ENCODE measurements at regions of chr15 and their contacts with region 1.

Region 1: GRCh38 chr15:76311100-76311953 is at the start of gene ETFA:
- H3K4me3 ChIP-seq: peak within 1 kb of the TSS; percentile 77
- H3K27ac ChIP-seq: peak within 1 kb of the TSS; percentile 84
- H3K4me1 ChIP-seq: peaks cover 16% of the 10 kb centered on the region; the same call in 1 of the 2 replicates
- CTCF ChIP-seq: peak; percentile 39; the same call in 1 of the 2 replicates

Region 2: DNA sequence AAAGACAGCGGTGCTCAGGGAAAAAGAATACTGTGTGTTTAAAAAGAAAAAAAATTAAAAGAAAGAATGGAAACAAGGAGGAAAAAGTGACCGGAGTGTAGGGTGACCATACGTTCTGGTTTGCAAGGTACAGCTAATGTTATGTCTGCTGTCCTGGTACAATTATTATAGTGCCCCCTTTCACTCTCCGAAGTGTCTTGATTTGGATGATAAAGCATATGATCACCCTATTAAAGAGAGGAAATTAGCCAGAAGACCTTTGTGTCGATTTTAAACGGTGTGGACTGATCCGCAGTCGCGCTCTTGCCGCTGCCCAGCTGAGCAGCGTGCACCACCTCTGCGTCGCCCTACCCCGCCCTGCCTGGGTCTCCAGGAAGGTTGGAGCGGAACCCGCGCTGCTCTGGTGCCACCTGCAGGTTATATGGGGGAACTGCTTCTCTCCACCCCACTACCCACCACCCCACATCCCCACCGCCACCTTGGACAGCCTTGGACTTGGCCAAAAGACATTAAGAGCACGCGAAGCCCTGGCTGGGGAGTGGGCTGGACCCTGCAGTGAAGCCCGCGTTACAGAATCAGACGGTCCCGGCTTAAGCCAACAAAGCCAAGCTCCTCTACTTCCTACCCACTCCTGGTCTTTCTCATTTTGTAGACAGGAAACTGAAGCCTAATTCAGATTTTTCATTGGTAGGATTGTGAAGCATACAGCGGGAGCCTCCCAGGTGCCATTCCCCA is 509.3 kb before region 1 on chr15:
- CTCF ChIA-PET with region 1: no interaction called
- POLR2A ChIA-PET with region 1: no interaction called
- H3K4me3 ChIP-seq: no peak overlapping the region
- H3K27ac ChIP-seq: no peak overlapping the region
- H3K4me1 ChIP-seq: no peaks in the 10 kb centered on the region
- CTCF ChIP-seq: peak; percentile 92

Region 3: DNA sequence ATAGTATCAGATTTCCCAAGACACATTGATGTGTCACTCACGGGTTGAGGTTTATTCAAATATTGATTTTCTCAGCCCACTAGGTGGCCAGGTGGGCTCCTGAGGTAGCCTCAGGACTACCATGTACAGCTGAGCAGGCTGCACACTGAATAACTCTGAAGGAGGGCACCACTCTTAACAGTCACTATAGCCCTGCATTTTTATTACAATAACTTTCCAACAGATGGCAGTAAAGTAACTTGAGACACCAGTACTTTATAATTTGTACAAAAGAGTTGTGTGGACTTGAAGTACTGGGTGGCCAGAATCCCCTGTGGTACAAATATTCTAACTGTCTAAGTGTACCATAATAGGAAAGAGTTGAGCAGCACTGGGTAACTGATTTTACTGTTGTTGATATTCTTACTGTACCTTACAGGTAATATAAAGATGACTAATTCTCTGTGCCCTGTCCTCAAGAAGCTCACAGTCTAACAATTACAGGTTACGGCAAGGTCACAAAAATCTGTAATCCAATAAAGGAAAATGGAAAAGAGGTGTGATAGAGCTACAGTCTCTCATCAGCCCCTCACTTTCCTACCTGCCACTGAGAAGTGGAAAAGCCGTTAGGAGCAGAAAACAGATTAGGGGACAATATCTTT is 76.0 kb before region 1 on chr15:
- CTCF ChIA-PET with region 1: interaction called, 6 read pairs
- POLR2A ChIA-PET with region 1: interaction called, 12 read pairs
- H3K4me3 ChIP-seq: no peak overlapping the region
- H3K27ac ChIP-seq: no peak overlapping the region
- H3K4me1 ChIP-seq: peaks cover 28% of the 10 kb centered on the region
- CTCF ChIP-seq: peak; percentile 24; the same call in 1 of the 2 replicates

Region 4: DNA sequence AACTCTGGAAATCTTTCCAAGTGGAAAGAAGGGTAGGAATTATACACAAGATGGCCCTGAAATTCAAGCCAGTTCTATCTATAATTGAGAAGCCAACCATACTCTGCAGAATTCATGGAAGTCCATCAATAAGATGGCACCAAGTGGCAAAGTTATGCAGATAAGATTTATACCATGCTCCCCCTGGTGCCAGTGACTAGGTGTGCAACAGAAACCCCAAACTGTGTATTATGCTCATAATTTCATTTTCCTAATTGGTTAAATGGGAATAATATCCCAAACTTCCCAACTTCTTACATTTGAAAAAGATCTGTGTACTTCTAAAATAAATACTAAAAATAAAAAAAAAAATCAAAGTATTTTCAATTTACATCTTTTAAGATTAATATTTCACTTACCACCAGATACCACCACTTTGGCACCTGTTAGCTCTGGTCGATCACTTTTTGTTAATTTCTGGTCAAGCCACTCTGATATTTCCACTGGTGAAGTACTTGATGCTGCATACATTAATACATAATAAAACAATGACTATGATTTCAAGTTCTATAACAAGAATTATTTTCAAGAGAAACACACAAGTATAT is 26.0 kb before region 1 on chr15:
- CTCF ChIA-PET with region 1: interaction called, 4 read pairs
- POLR2A ChIA-PET with region 1: interaction called, 12 read pairs
- H3K4me3 ChIP-seq: no peak overlapping the region
- H3K27ac ChIP-seq: no peak overlapping the region
- H3K4me1 ChIP-seq: no peaks in the 10 kb centered on the region
- CTCF ChIP-seq: 0 out of 2 replicates have a peak, but pooled peaks have one; percentile 12

Region 5: GRCh38 chr15:76324066-76324465 is 12.7 kb after region 1 on chr15:
- CTCF ChIA-PET with region 1: interaction called, 8 read pairs
- POLR2A ChIA-PET with region 1: interaction called, 24 read pairs
- H3K4me3 ChIP-seq: no peak overlapping the region
- H3K27ac ChIP-seq: no peak overlapping the region
- H3K4me1 ChIP-seq: peaks cover 30% of the 10 kb centered on the region
- CTCF ChIP-seq: no peak

Region 6: DNA sequence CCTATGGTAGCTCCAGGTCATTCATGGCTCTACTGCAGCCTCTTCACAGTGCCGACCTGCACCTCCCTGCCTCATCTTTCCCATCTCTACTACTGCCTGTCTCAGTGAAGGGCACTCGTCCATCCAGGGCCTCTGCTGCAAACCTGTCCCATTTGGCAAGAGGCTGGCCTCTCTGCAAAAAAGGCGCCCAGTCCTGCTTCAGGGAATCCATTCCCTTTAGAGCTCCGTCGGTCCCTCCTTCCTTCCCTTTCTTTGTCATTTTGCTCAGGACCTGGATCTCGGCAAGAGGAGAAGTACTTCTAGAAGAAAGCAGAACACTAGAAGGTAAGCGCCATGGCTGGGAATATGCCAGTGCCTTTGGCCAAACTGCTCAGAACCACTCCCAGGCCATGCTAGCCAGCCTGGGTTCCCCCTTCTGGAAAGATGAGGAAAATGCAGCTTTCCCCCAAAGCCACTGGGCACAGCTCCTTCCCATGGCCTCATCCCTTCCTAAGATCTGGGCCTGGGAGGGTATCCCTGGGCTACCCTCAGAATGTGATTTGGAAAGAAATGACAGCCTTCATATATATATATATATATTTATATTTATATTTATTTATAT is 18.9 kb after region 1 on chr15:
- CTCF ChIA-PET with region 1: interaction called, 8 read pairs
- POLR2A ChIA-PET with region 1: interaction called, 83 read pairs
- H3K4me3 ChIP-seq: no peak overlapping the region
- H3K27ac ChIP-seq: no peak overlapping the region
- H3K4me1 ChIP-seq: peaks cover 9% of the 10 kb centered on the region
- CTCF ChIP-seq: no peak

Region 7: DNA sequence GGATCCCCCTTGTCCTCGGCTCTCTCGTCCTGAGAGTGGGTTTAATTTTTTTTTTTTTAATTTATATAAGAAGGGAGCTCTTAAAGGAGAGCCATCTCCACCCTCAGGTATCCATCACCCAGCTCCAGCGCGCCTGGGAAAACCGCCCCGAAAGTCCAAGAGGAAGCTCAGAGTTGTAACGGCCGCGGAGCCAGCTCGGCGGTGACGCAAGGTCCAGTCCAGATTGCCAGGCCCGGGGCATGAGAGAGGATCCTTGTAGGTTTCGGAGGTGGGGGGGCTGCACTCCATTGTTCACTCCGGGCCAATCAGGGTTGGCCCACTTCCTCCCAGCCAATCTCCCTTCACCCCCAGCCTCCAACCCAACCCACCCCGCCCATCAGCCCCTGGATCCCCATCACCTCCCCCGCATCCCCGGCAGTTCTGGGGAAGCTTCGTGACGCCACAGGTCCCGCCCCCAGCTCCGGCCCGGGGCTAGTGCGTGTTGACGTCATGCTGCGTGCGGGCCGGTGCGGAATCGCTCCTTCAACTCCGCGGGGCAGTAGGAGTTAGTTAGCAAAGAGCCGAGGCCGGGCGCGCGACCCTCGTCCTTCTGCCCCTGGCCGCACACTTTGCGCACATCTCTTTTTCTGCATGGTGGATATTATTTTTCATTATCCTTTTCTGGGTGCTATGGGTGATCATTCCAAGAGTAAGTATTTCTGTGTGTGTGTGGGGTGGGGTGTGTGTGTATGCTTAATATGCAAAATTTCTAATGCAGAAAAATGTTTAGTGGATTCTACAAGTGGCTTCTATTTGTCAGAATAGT is 25.1 kb after region 1 on chr15 and contains the start of gene ISL2:
- CTCF ChIA-PET with region 1: interaction called, 3 read pairs
- POLR2A ChIA-PET with region 1: interaction called, 83 read pairs
- H3K4me3 ChIP-seq: peak within 1 kb of the TSS; percentile 78
- H3K27ac ChIP-seq: peak within 1 kb of the TSS; percentile 96
- H3K4me1 ChIP-seq: peaks cover 3% of the 10 kb centered on the region; the same call in 1 of the 2 replicates
- CTCF ChIP-seq: no peak

Region 8: DNA sequence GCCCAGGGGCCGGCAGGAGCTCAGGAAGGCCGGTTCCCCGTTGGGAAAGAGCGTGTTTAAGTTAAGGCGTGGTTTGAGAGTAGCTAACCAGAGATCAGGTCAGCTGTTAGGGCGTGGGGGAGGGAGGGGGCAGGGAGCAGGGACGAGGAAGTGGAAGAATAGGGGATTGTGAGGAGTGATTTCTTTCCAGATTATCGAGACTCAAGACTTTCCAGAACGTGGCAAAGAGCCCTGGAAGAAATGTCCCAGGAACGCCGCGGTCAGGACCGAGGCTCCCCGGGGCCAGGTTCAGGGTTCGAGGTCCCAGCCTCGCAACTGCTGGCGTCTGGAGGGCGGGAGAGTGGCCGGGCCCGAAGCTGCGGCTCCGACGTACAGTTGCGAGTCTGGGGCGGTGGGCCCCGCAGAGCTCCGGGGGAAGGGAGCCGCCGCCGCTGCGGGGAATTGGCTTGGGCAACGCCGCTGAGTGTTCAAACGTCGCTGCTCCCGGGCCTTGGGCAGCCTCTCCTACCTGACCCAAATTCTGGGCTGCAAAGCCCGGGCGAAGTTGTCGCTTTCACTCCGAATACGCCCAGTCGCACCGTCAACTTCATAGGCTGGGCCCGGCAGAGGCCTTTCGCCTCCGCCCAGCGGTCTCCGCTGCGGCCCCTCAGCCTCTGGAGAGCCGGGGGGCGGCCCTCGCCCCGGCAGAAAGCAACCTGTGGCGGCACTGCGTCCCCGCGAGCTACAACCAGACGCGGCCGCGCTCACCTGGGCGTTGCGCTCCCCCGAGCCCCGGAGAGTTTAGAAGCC is 34.7 kb after region 1 on chr15:
- CTCF ChIA-PET with region 1: interaction called, 3 read pairs
- POLR2A ChIA-PET with region 1: interaction called, 12 read pairs
- H3K4me3 ChIP-seq: peak overlapping the region; percentile 59
- H3K27ac ChIP-seq: peak overlapping the region; percentile 86
- H3K4me1 ChIP-seq: peaks cover 39% of the 10 kb centered on the region
- CTCF ChIP-seq: peak; percentile 33; the same call in 1 of the 2 replicates

Region 9: GRCh38 chr15:77305953-77306352 is 994.6 kb after region 1 on chr15:
- CTCF ChIA-PET with region 1: no interaction called
- POLR2A ChIA-PET with region 1: no interaction called
- H3K4me3 ChIP-seq: no peak overlapping the region
- H3K27ac ChIP-seq: no peak overlapping the region
- H3K4me1 ChIP-seq: peaks cover 13% of the 10 kb centered on the region
- CTCF ChIP-seq: no peak

Measured in HEK293 (cell line).